ENCODE measurements at regions of chr3 and their contacts with region 1.

Region 1: GRCh38 chr3:112327371-112327951 is 5.5 kb upstream of the CD200 start:
- DNase-seq: peak in 7 of 9 donors; percentile 41 to 76 (median 66)
- ATAC-seq: peak; percentile 100
- H3K4me3 ChIP-seq: no peak overlapping the region
- H3K4me3 Mint-ChIP-seq: no peak overlapping the region
- H3K27ac ChIP-seq: no peak overlapping the region
- H3K27ac Mint-ChIP-seq: no peak overlapping the region
- H3K4me1 ChIP-seq: no peaks in the 10 kb centered on the region
- H3K4me1 Mint-ChIP-seq: peaks cover 0 to 8% (median 6%) of the 10 kb centered on the region in 7 donors
- H3K27me3 ChIP-seq: no peaks in the 10 kb centered on the region
- H3K27me3 Mint-ChIP-seq: peaks cover 0 to 20% (median 5%) of the 10 kb centered on the region in 5 donors

Region 2: DNA sequence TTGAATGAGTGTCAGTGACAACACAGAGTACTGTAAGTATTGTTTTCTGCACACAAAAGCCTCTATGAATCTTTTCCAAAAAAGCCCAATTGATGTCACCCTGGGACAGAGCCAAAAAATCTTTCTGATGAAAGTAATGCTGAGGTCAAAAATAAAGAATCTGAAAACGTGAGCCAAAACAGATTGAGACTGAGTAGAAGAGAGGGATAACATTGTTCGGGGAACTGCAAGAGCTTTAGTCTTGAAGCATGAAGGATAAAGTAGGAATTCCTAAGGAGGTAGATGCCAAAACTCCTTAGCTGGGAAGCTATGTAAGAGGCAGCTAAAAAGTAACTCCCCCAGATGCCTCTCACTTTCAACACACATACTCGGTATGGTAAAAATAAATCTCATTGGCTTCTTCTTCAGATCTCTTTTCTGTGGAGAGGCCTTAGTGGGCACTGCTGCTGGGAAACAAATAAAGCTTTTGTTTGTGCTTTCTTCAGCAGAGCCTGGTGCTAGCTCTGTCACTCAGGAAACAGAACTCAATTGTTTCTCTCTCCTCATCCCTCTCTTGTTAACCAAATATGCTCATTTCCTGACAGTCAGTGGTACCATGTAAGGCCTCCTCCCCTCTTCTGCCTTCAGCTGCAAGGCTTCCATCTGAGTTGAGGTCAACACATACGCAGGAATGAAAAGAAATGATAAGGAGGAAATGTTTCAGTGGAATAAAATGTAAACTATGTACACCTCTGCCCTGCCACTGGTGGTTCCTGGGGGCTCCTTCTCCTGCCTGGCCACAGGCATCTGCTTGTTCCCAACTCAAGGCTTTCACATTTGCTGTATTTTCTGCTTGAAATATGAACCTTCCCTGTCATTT is 63.6 kb after region 1 on chr3:
- CTCF ChIA-PET with region 1: no interaction called
- POLR2A ChIA-PET with region 1: no interaction called
- intact Hi-C with region 1: no loop called
- DNase-seq: peak in 5 of 9 donors; percentile 7 to 34 (median 25)
- ATAC-seq: peak; percentile 60
- H3K4me3 ChIP-seq: no peak overlapping the region
- H3K4me3 Mint-ChIP-seq: peak overlapping the region in 6 of 10 donors; percentile 9 to 59 (median 34)
- H3K27ac ChIP-seq: no peak overlapping the region
- H3K27ac Mint-ChIP-seq: peak overlapping the region; percentile 60 to 91 (median 77)
- H3K4me1 ChIP-seq: peaks cover 0 to 9% of the 10 kb centered on the region in 2 donors
- H3K4me1 Mint-ChIP-seq: peaks cover 27 to 50% (median 42%) of the 10 kb centered on the region in 7 donors
- H3K27me3 ChIP-seq: no peaks in the 10 kb centered on the region
- H3K27me3 Mint-ChIP-seq: no peaks in the 10 kb centered on the region

Region 3: GRCh38 chr3:112437146-112438022 is 109.9 kb after region 1 on chr3:
- CTCF ChIA-PET with region 1: interaction called, 3 read pairs
- POLR2A ChIA-PET with region 1: no interaction called
- intact Hi-C with region 1: loop called in 1 of 2 experiments (anchors 1 kb)
- DNase-seq: peak in 4 of 9 donors; percentile 8 to 23 (median 14)
- ATAC-seq: peak; percentile 83
- H3K4me3 ChIP-seq: peak overlapping the region; percentile 9
- H3K4me3 Mint-ChIP-seq: no peak overlapping the region
- H3K27ac ChIP-seq: no peak overlapping the region
- H3K27ac Mint-ChIP-seq: peak overlapping the region in 2 of 9 donors; percentile 35 to 53
- H3K4me1 ChIP-seq: peaks cover 0 to 7% of the 10 kb centered on the region in 2 donors
- H3K4me1 Mint-ChIP-seq: peaks cover 5 to 29% (median 16%) of the 10 kb centered on the region in 7 donors
- H3K27me3 ChIP-seq: no peaks in the 10 kb centered on the region
- H3K27me3 Mint-ChIP-seq: no peaks in the 10 kb centered on the region

Region 4: GRCh38 chr3:112531358-112531781 is 203.9 kb after region 1 on chr3:
- CTCF ChIA-PET with region 1: no interaction called
- POLR2A ChIA-PET with region 1: no interaction called
- intact Hi-C with region 1: loop called (anchors 1 kb)
- DNase-seq: peak in 5 of 9 donors; percentile 25 to 40 (median 25)
- ATAC-seq: peak; percentile 45
- H3K4me3 ChIP-seq: no peak overlapping the region
- H3K4me3 Mint-ChIP-seq: no peak overlapping the region
- H3K27ac ChIP-seq: no peak overlapping the region
- H3K27ac Mint-ChIP-seq: peak overlapping the region in 6 of 9 donors; percentile 7 to 72 (median 14)
- H3K4me1 ChIP-seq: no peaks in the 10 kb centered on the region
- H3K4me1 Mint-ChIP-seq: peaks cover 0 to 5% (median 3%) of the 10 kb centered on the region in 7 donors
- H3K27me3 ChIP-seq: no peaks in the 10 kb centered on the region
- H3K27me3 Mint-ChIP-seq: no peaks in the 10 kb centered on the region

Measured in naive thymus-derived CD4-positive, alpha-beta T cell (primary cell).